ENCODE measurements at regions of chr15 and their contacts with region 1.

Region 1: GRCh38 chr15:28885630-28886430 is at the start of gene APBA2:
- DNase-seq: peak; percentile 2 to 72 (median 48)
- H3K4me3 ChIP-seq: peak within 1 kb of the TSS; percentile 60
- H3K4me3 Mint-ChIP-seq: peak within 1 kb of the TSS; percentile 76 to 91 (median 88)
- H3K27ac ChIP-seq: peak within 1 kb of the TSS; percentile 27
- H3K27ac Mint-ChIP-seq: peak within 1 kb of the TSS in 4 of 8 donors; percentile 5 to 91 (median 84)
- H3K4me1 ChIP-seq: peaks cover 49% of the 10 kb centered on the region
- H3K4me1 Mint-ChIP-seq: peaks cover 30 to 47% (median 32%) of the 10 kb centered on the region in 3 donors
- H3K27me3 ChIP-seq: no peaks in the 10 kb centered on the region
- H3K27me3 Mint-ChIP-seq: peaks cover 0 to 3% of the 10 kb centered on the region in 2 donors
- total RNA-seq, gene APBA2: 15.7 to 18.0 TPM

Region 2: DNA sequence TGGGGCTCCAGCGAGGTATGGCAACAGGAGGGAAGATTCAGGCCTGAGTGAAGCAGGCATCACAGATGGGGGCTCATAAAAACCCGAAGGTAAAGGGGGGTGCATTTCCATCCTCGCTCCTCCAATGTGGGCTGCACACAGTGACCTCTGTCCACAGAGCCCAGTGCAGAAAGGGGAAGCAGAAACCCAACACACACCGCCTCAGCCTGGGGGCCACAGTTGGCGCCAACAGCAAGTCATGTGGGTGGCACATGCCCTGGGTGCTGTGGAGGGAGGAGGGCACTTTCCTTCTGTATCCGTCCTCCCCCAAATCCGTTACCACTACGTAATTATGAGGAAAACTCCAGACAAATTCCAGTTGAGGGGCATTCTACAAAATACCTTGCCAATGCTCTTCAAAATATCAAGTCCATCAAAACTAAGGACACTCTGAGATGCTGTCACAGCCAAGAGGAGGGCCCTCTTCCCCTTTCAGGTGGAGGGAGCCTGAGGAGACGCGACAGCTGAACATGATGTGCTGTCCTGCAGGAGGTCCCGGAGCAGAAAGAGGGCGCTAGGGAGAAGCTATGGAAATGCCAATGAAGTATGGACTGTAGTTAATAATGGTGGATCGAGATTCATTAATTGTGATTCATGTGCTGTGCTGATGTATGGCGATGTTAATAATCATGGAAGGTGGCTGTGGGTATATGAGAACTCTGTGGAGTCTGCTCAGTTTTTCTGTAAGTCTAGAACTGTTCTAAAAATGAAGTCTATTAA is 16.3 kb after region 1 on chr15:
- CTCF ChIA-PET with region 1: no interaction called
- POLR2A ChIA-PET with region 1: no interaction called
- DNase-seq: no peak
- H3K4me3 ChIP-seq: no peak overlapping the region
- H3K4me3 Mint-ChIP-seq: no peak overlapping the region
- H3K27ac ChIP-seq: no peak overlapping the region
- H3K27ac Mint-ChIP-seq: peak overlapping the region in 3 of 8 donors; percentile 8 to 68 (median 54)
- H3K4me1 ChIP-seq: peaks cover 17% of the 10 kb centered on the region
- H3K4me1 Mint-ChIP-seq: peaks cover 22 to 90% (median 47%) of the 10 kb centered on the region in 3 donors
- H3K27me3 ChIP-seq: no peaks in the 10 kb centered on the region
- H3K27me3 Mint-ChIP-seq: peaks cover 0 to 1% of the 10 kb centered on the region in 2 donors

Region 3: GRCh38 chr15:28921919-28922706 is 36.3 kb after region 1 on chr15:
- CTCF ChIA-PET with region 1: interaction called, 7 read pairs
- POLR2A ChIA-PET with region 1: interaction called, 15 read pairs
- DNase-seq: no peak
- H3K4me3 ChIP-seq: no peak overlapping the region
- H3K4me3 Mint-ChIP-seq: peak overlapping the region in 6 of 7 donors; percentile 58 to 90 (median 64)
- H3K27ac ChIP-seq: no peak overlapping the region
- H3K27ac Mint-ChIP-seq: peak overlapping the region in 5 of 8 donors; percentile 52 to 95 (median 76)
- H3K4me1 ChIP-seq: peaks cover 42% of the 10 kb centered on the region
- H3K4me1 Mint-ChIP-seq: peaks cover 41 to 86% (median 61%) of the 10 kb centered on the region in 3 donors
- H3K27me3 ChIP-seq: no peaks in the 10 kb centered on the region
- H3K27me3 Mint-ChIP-seq: no peaks in the 10 kb centered on the region

Region 4: GRCh38 chr15:29103824-29104565 is 218.2 kb after region 1 on chr15:
- CTCF ChIA-PET with region 1: no interaction called
- POLR2A ChIA-PET with region 1: no interaction called
- DNase-seq: peak in 4 of 5 donors; percentile 24 to 55 (median 40)
- H3K4me3 ChIP-seq: no peak overlapping the region
- H3K4me3 Mint-ChIP-seq: peak overlapping the region in 1 of 7 donors; percentile 11
- H3K27ac ChIP-seq: no peak overlapping the region
- H3K27ac Mint-ChIP-seq: no peak overlapping the region
- H3K4me1 ChIP-seq: no peaks in the 10 kb centered on the region
- H3K4me1 Mint-ChIP-seq: peaks cover 7 to 9% (median 8%) of the 10 kb centered on the region in 3 donors
- H3K27me3 ChIP-seq: no peaks in the 10 kb centered on the region
- H3K27me3 Mint-ChIP-seq: no peaks in the 10 kb centered on the region